Activated CD8-positive, alpha-beta T cell treated with anti-CD3 and anti-CD28 coated beads for 36 hours (primary cell): ENCODE measurements at regions of chr1 and their contacts with region 1.

Region 1: GRCh38 chr1:212368073-212368484 is 46.6 kb downstream of the PACC1 start:
- DNase-seq: peak; percentile 73
- ATAC-seq: peak; percentile 95
- H3K4me3 Mint-ChIP-seq: no peak overlapping the region
- H3K27ac Mint-ChIP-seq: peak overlapping the region; percentile 14
- H3K4me1 Mint-ChIP-seq: no peaks in the 10 kb centered on the region
- H3K27me3 Mint-ChIP-seq: no peaks in the 10 kb centered on the region
- CTCF ChIP-seq: peak; percentile 77

Region 2: GRCh38 chr1:211680752-211681327 is 687.2 kb before region 1 on chr1:
- CTCF ChIA-PET with region 1: interaction called, 13 read pairs
- POLR2A ChIA-PET with region 1: no interaction called
- intact Hi-C with region 1: no loop called
- DNase-seq: peak; percentile 79
- ATAC-seq: peak; percentile 93
- H3K4me3 Mint-ChIP-seq: no peak overlapping the region
- H3K27ac Mint-ChIP-seq: peak overlapping the region; percentile 83
- H3K4me1 Mint-ChIP-seq: peaks cover 8% of the 10 kb centered on the region
- H3K27me3 Mint-ChIP-seq: no peaks in the 10 kb centered on the region
- CTCF ChIP-seq: peak; percentile 69

Region 3: GRCh38 chr1:212055333-212055732 is 312.7 kb before region 1 on chr1:
- CTCF ChIA-PET with region 1: no interaction called
- POLR2A ChIA-PET with region 1: no interaction called
- intact Hi-C with region 1: loop called (anchors 5 kb)
- DNase-seq: no peak
- ATAC-seq: no peak
- H3K4me3 Mint-ChIP-seq: no peak overlapping the region
- H3K27ac Mint-ChIP-seq: no peak overlapping the region
- H3K4me1 Mint-ChIP-seq: no peaks in the 10 kb centered on the region
- H3K27me3 Mint-ChIP-seq: no peaks in the 10 kb centered on the region
- CTCF ChIP-seq: no peak

Region 4: GRCh38 chr1:212062832-212063438 is 305.1 kb before region 1 on chr1:
- CTCF ChIA-PET with region 1: interaction called, 33 read pairs
- POLR2A ChIA-PET with region 1: no interaction called
- intact Hi-C with region 1: loop called (anchors 5 kb)
- DNase-seq: no peak
- ATAC-seq: peak; percentile 53
- H3K4me3 Mint-ChIP-seq: no peak overlapping the region
- H3K27ac Mint-ChIP-seq: no peak overlapping the region
- H3K4me1 Mint-ChIP-seq: no peaks in the 10 kb centered on the region
- H3K27me3 Mint-ChIP-seq: no peaks in the 10 kb centered on the region
- CTCF ChIP-seq: peak; percentile 87

Region 5: DNA sequence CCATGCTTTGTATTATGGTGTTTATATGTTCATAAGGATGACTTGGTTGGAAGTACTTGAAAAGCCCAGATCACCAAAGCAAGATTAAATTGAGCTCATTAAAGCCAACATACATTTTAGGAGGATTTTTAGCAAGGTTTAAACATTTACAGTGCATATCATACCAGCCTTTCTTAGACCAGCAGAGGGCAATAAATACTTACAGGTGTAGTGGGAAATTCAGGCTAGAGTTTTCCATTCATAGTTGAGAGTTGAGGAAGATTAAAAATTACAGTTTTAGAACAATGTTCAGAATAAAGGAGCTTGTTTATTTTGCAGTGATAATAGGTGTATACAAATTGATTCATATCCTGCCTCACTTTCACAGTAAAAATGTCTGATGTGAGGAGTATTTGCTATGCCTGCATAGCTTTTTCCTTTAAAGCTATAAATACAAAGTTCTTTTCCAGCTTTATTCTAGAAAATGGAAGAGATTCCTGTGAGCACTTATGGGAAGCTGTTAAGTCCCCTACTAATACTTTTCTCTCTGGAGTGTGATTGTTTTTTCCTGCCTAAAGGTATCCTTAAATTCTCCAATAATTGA is 297.3 kb before region 1 on chr1:
- CTCF ChIA-PET with region 1: interaction called, 37 read pairs
- POLR2A ChIA-PET with region 1: no interaction called
- intact Hi-C with region 1: no loop called
- DNase-seq: no peak
- ATAC-seq: peak; percentile 42
- H3K4me3 Mint-ChIP-seq: no peak overlapping the region
- H3K27ac Mint-ChIP-seq: no peak overlapping the region
- H3K4me1 Mint-ChIP-seq: no peaks in the 10 kb centered on the region
- H3K27me3 Mint-ChIP-seq: no peaks in the 10 kb centered on the region
- CTCF ChIP-seq: peak; percentile 36

Region 6: GRCh38 chr1:212381397-212382035 is 13.4 kb after region 1 on chr1:
- CTCF ChIA-PET with region 1: interaction called, 22 read pairs
- POLR2A ChIA-PET with region 1: interaction called, 3 read pairs
- intact Hi-C with region 1: no loop called
- DNase-seq: no peak
- ATAC-seq: no peak
- H3K4me3 Mint-ChIP-seq: no peak overlapping the region
- H3K27ac Mint-ChIP-seq: no peak overlapping the region
- H3K4me1 Mint-ChIP-seq: no peaks in the 10 kb centered on the region
- H3K27me3 Mint-ChIP-seq: no peaks in the 10 kb centered on the region
- CTCF ChIP-seq: no peak